Head of caudate nucleus (tissue), 42 donors: ENCODE measurements at regions of chr9 and their contacts with region 1.

Region 1: DNA sequence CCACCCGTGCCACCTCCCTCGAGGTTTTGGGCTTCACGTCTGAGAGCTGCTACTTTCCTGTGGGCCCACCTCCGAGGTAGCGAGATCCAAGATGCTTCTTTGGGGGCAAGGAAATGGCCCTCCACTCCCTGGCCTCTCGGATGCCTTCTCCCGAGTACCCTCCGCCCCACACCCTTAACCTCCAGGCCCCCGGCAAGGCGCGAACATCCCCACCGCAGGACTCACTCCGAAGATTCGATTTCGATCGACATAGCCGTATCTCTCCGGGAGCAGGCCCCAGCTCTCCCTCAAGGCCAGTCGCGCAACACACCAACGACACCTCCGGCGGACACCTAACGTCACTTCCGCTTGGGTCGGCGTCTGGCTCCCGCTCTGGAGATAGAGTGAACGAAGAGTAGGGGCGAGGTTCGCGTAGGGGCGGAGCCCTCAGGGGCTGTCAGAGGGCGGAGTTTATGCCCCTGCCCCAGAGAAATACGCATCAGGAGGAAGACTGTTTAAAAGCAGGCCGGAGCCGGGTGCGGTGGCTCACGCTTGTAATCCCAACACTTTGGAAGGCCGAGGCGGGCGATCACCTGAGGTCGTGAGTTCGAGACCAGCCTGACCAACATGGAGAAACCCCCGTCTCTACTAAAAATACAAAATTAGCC is at the start of gene SMU1:
- DNase-seq: peak; percentile 94 to 99 (median 97)

Region 2: DNA sequence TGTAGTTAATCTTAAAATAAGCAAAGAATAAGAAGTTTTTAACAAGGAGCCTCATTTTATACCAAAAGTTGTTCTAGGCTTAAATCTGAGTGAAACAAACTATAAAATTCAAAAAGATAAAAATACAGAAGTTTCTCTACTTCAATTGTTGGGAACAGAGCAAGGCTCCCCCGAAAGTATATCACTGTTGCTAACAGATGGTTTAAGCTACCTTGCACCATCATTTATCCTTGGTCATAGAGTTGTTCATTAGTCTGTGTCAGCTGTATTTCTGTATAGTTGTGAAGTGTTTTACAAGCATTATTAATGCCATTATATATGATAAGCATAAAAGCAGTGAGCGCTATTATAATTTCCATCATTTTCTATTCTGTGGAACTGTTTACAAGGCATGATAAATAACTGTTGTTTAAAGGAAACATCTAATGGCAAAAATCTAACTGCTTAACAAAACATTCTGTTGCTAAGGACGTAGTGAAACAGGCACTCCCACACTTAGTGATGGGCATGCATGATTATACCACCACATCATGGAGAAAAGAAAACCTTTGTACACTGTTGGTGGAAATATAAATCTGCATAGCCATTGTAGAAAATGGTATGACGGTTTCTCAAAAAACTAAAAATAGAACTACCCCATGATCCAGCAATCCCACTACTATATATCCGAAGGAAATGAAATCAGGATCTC is 715.4 kb before region 1 on chr9:
- intact Hi-C with region 1: no loop called
- DNase-seq: no peak

Region 3: DNA sequence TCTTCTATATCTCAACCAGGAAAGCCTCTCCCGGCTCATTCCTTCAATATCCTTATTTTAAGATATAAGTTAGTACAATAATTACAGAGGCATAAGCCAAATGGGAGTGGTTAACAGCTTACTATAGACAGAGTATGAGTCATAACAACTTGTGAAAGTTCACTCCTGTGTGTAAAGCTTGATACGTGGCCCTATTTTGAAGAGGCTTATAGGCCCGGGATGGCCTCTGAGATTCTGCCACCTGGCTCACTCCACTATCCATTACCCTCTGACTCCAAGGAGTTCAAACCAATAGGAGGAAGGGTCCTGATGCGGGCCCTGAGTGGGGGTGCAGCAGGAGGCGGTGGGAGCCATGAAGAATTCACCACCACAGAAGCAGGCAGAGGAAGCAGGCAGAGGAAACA is 54.0 kb after region 1 on chr9:
- intact Hi-C with region 1: no loop called
- DNase-seq: no peak

Region 4: DNA sequence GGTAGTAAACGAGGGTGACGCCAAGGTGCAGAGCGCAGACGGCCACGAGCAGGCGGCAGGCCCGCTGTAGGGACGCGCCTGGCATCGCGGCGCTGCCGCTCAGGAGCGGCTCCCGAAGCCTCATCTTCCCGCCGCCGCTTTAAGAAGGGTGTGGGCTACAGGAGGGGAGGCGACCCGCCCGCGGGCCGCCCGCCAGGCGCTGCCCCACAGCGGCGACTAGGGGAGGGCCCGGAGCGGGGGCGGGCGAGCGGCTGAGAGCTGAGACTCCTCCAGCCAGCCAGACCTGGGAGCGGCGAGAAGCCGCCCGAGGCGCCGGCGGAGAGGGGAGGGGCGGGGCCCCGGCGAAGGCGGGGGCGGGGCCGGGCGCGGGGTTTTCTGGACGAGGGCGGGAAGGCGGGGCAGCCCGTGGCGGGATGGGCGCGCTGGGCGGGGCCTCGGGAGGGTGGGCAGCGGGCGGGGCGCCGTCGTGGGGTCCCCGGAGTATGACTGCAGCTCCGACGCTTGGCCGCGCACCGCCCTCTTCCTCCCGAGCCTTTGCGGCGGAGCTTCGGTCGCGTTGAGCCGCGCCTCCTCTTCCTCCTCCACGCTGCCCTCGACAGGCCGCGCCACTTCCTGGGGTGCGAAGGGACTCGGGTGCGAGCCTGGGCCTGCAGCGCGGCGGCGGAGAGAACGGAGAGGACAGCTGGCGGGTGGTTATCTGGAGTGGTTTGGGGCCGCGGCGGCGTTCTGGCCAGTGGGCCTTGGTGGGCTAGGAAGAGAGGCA is 90.7 kb after region 1 on chr9 and contains the start of gene B4GALT1:
- intact Hi-C with region 1: loop called (anchors 5 kb)
- DNase-seq: peak; percentile 36 to 94 (median 85)

Region 5: DNA sequence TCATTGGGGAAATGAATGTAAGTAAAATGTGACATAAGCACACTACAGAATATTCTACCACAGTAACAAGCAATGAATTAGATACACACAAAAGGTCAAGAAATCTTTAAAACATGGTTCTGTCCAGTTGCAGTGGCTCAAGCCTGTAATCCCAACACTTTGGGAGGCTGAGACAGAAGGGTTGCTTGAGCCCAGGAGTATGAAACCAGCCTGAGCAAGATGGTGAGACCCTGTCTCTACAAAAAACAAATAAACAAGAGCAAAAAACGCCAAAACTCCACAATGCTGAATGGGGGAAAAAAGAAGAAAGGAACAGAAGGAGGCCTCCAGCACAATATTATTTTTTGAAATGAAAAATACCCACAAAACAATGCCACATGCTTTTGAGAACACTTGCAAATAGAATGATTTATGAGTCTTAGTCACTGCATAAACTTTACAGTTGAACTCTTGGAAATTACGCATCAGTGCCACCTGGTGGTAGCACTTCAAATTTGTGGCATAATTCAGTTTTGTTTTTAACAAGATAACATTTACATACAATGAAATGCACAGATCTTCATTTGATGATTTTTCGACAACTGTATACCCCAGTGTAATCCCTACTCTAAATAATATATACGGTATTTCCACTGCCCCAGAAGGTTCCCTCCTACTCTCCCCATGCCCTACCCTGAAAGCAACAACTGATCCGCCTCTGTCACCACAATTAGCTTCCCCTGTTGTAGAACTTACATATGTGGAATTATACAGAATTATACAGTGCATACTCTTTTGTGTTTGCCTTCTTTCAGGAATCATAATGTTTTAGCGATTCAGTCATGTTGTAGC is 149.1 kb after region 1 on chr9:
- intact Hi-C with region 1: loop called (anchors 5 kb)
- DNase-seq: peak in 37 of 42 donors; percentile 18 to 89 (median 70)